ENCODE measurements at regions of chr14 and their contacts with region 1.

Region 1: GRCh38 chr14:22472935-22473854 is 115.8 kb downstream of the DAD1 start:
- DNase-seq: peak; percentile 89
- H3K4me3 ChIP-seq: no peak overlapping the region
- H3K27ac ChIP-seq: peak overlapping the region; percentile 80
- H3K4me1 ChIP-seq: peaks cover 94% of the 10 kb centered on the region
- H3K27me3 ChIP-seq: no peaks in the 10 kb centered on the region
- CTCF ChIP-seq: peak; percentile 75

Region 2: DNA sequence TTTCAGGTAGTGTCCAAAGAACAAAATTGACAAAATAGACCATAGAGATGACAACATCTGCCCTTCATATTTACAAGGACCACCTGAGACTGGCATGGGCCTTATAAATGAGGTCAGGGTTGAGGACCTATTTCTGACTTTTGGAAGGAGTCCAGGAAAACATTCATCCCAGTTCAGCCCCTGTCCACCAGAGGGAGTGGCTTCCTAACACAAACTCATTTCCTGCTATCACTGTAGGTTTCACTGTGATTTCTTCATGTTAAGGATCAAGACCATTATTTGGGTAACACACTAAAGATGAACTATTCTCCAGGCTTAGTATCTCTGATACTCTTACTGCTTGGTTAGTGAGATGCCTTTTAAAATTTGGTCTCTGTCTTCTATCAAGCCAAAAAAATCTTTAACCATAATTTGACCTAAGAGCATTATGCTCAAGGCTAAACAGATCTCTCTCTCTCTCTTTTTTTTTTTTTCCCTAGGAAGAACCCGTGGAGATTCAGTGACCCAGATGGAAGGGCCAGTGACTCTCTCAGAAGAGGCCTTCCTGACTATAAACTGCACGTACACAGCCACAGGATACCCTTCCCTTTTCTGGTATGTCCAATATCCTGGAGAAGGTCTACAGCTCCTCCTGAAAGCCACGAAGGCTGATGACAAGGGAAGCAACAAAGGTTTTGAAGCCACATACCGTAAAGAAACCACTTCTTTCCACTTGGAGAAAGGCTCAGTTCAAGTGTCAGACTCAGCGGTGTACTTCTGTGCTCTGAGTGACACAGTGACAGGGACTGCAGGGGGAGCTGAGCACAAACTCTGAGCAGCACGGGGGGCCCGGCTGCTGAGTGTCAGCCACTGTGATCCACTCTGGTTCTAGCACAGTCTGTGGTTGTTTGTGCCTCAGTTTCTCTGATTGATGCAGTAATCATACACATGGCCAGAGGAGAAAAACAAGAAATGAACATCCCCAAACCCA is 532.0 kb before region 1 on chr14:
- CTCF ChIA-PET with region 1: no interaction called
- POLR2A ChIA-PET with region 1: no interaction called
- intact Hi-C with region 1: no loop called
- DNase-seq: peak; percentile 53
- H3K4me3 ChIP-seq: no peak overlapping the region
- H3K27ac ChIP-seq: no peak overlapping the region
- H3K4me1 ChIP-seq: no peaks in the 10 kb centered on the region
- H3K27me3 ChIP-seq: no peaks in the 10 kb centered on the region
- CTCF ChIP-seq: peak; percentile 60

Region 3: GRCh38 chr14:22319526-22320361 is 153.5 kb before region 1 on chr14:
- CTCF ChIA-PET with region 1: interaction called, 4 read pairs
- POLR2A ChIA-PET with region 1: no interaction called
- intact Hi-C with region 1: loop called (anchors 5 kb)
- DNase-seq: peak; percentile 81
- H3K4me3 ChIP-seq: no peak overlapping the region
- H3K27ac ChIP-seq: no peak overlapping the region
- H3K4me1 ChIP-seq: no peaks in the 10 kb centered on the region
- H3K27me3 ChIP-seq: no peaks in the 10 kb centered on the region
- CTCF ChIP-seq: peak; percentile 86

Region 4: GRCh38 chr14:22432348-22432976 is 40.7 kb before region 1 on chr14:
- CTCF ChIA-PET with region 1: interaction called, 5 read pairs
- POLR2A ChIA-PET with region 1: interaction called, 3 read pairs
- intact Hi-C with region 1: loop called (anchors 5 kb)
- DNase-seq: peak; percentile 98
- H3K4me3 ChIP-seq: peak overlapping the region; percentile 8
- H3K27ac ChIP-seq: peak overlapping the region; percentile 97
- H3K4me1 ChIP-seq: peaks cover 84% of the 10 kb centered on the region
- H3K27me3 ChIP-seq: no peaks in the 10 kb centered on the region
- CTCF ChIP-seq: no peak

Region 5: DNA sequence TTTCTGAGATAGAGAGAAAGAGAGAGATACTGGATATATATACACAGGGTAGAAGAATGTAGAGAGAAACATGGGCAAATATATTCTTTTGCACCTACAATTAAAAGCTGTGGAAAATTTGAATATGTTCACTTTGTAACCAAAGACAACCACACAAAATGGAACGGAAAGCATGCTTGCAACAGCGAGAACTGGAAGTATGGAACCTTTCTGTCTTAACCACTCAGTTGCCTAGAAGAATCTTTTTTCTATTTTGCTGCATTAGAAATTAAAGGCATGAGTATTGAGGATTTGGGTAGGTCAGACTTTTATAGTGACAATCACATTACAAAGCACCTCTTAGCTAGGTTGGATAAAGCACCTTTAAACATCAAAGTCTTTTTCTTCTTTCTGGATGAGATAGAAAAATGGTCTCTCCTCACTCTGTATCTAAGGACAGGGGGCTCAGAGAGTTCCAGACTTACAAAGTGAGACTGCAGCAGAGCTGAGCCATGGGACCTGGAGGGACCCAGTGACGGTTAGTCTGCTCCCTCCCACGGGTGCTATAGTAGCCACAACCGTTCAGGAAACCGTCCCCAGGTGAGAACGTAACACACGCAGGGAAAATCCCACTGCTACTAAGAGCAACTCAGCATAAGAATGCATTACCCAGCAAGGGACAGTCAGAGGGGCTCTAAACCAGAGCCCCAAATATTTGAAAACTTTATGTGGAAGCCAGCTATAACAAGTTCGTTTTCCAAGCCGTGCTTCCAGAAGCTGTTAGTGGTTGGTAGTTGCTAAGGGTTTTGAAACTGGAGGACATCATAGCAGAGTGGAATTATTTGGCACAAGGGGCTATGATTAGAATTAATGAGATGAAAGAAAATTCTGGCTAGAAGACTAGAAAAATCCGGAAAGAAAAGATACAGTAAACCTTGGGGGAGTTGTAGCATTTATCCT is 18.8 kb after region 1 on chr14:
- CTCF ChIA-PET with region 1: no interaction called
- POLR2A ChIA-PET with region 1: no interaction called
- intact Hi-C with region 1: no loop called
- DNase-seq: no peak
- H3K4me3 ChIP-seq: no peak overlapping the region
- H3K27ac ChIP-seq: no peak overlapping the region
- H3K4me1 ChIP-seq: peaks cover 52% of the 10 kb centered on the region
- H3K27me3 ChIP-seq: no peaks in the 10 kb centered on the region
- CTCF ChIP-seq: no peak

Region 6: DNA sequence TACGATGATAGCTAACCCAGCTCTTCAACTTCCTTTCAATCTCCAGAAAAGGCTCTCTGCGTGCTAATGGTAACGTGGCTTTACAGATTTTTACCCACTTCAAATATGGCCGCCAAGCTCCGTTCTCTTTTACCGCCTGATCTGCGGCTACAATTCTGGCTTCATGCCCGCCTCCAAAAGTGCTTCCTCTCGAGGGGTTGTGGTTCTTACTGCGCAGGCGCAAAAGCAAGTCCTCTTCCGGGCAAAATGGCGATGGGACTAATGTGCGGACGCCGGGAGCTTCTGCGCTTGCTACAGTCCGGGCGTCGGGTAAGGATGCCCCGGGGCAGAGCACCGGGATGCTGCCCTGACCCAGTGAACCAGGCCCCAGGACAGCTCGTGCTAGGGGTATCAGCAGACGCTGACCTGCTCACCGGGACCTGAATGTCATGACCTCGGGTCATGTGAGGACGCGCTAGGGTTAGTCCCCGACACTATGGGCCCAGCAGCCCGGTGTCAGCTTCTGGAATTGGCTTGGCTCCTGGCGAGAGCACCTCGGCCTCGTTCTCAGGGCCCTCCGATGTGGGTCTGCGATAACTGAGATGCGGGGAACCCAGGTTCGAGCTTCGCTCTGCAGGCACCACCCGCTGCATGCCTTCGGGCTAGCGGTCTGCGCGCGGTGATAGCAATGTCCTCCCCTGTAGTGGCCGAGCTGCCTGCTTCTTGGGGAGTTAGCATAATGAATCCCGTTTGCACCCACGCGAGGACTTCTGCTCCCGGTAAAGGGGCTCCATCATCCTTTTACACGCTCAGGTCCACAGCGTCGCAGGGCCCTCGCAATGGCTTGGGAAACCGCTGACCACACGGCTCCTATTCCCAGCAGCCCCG is 293.5 kb after region 1 on chr14 and contains the start of gene OXA1L:
- CTCF ChIA-PET with region 1: no interaction called
- POLR2A ChIA-PET with region 1: no interaction called
- intact Hi-C with region 1: loop called (anchors 10 kb)
- DNase-seq: peak; percentile 98
- H3K4me3 ChIP-seq: peak within 1 kb of the TSS; percentile 71
- H3K27ac ChIP-seq: peak within 1 kb of the TSS; percentile 84
- H3K4me1 ChIP-seq: peaks cover 12% of the 10 kb centered on the region
- H3K27me3 ChIP-seq: no peaks in the 10 kb centered on the region
- CTCF ChIP-seq: no peak
- total RNA-seq, gene OXA1L: 103 and 107 TPM in 2 replicates

Region 7: DNA sequence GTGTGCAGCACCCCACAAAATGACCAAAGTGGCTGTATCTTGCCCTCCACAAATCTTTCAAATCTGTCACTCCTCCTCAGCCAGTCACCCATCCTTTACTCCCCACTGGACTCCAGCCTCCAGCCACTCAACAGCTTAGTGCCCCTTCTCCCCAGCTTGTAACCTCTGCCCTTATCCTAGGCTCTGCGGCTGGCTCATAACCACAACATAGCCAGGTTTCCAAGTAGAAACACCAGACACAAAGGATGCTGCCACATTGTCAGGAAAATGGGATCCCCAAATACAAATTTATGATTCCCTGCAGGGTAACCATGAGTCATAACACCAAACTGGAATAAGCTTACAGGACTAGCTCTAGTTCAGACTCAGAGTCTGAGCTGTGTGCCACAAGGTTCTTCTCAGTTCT is 308.4 kb after region 1 on chr14:
- CTCF ChIA-PET with region 1: no interaction called
- POLR2A ChIA-PET with region 1: no interaction called
- intact Hi-C with region 1: no loop called
- DNase-seq: peak; percentile 32
- H3K4me3 ChIP-seq: no peak overlapping the region
- H3K27ac ChIP-seq: peak overlapping the region; percentile 68
- H3K4me1 ChIP-seq: peaks cover 4% of the 10 kb centered on the region
- H3K27me3 ChIP-seq: no peaks in the 10 kb centered on the region
- CTCF ChIP-seq: no peak

Region 8: GRCh38 chr14:23104591-23105347 is 631.6 kb after region 1 on chr14 and contains the start of gene CIROP:
- CTCF ChIA-PET with region 1: no interaction called
- POLR2A ChIA-PET with region 1: no interaction called
- intact Hi-C with region 1: no loop called
- DNase-seq: no peak
- H3K4me3 ChIP-seq: no peak within 1 kb of the TSS
- H3K27ac ChIP-seq: no peak within 1 kb of the TSS
- H3K4me1 ChIP-seq: peaks cover 9% of the 10 kb centered on the region
- H3K27me3 ChIP-seq: no peaks in the 10 kb centered on the region
- CTCF ChIP-seq: no peak
- total RNA-seq, gene CIROP: not detected in 2 replicates

Measured in A673 (cell line).